Activated CD4-positive, alpha-beta memory T cell treated with anti-CD3 and anti-CD28 coated beads for 36 hours (primary cell): ENCODE measurements at regions of chr3 and their contacts with region 1.

Region 1: GRCh38 chr3:158644345-158644908 is at the start of gene GFM1:
- DNase-seq: peak; percentile 93
- H3K4me3 Mint-ChIP-seq: peak within 1 kb of the TSS; percentile 89
- H3K27ac Mint-ChIP-seq: peak within 1 kb of the TSS; percentile 86
- H3K4me1 Mint-ChIP-seq: peaks cover 38% of the 10 kb centered on the region
- H3K27me3 Mint-ChIP-seq: no peaks in the 10 kb centered on the region
- total RNA-seq, gene GFM1: 48.7 to 57.3 TPM

Region 2: DNA sequence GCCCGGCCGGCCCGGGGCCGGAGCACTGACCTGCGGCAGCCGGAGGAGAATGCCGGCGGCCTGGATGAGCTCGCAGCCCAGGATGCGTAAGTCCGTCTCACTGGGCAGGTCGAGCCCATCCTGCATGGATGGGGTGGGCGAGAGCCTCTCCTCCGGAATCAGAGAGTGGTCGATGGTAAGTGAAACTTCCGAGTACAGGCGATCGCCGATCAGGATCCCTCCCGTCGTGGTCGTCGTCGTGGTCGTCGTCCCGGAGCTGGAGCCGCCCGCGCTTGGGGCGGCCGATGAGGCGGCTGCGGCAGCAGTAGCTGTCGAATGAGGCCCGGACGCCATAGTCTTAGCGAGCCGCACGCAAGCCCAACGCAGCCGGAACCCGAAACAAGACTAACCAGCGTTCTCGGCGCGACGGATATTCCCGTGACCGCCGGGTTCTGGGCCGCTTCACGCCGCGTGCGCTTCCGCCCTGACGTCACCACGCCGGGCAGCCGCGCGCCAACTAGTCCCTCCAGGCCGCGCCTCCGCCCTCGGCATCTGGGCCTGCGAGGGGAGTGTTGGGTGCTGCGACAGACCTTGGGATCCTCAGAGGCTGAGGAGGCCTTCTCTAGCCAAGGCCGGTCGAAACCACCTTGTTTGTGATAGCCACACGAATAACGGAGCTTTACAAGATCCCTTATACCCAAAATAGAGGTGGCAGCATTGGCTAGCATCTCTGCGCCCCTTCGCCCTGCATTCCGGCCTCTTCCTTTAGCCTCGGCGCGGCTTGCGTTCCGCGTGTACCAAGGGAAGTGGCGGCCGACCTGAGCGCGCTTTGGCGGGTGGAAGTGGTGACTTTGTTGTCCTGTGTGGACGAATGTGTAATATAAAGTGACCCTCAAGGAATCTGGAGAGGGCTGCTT is 1484.4 kb before region 1 on chr3 and contains the start of gene CCNL1:
- CTCF ChIA-PET with region 1: no interaction called
- POLR2A ChIA-PET with region 1: no interaction called
- intact Hi-C with region 1: loop called (anchors 10 kb)
- DNase-seq: peak; percentile 96
- H3K4me3 Mint-ChIP-seq: peak within 1 kb of the TSS; percentile 94
- H3K27ac Mint-ChIP-seq: peak within 1 kb of the TSS; percentile 99
- H3K4me1 Mint-ChIP-seq: peaks cover 46% of the 10 kb centered on the region
- H3K27me3 Mint-ChIP-seq: peaks cover 2% of the 10 kb centered on the region
- total RNA-seq, gene CCNL1: 144 to 150 TPM

Region 3: DNA sequence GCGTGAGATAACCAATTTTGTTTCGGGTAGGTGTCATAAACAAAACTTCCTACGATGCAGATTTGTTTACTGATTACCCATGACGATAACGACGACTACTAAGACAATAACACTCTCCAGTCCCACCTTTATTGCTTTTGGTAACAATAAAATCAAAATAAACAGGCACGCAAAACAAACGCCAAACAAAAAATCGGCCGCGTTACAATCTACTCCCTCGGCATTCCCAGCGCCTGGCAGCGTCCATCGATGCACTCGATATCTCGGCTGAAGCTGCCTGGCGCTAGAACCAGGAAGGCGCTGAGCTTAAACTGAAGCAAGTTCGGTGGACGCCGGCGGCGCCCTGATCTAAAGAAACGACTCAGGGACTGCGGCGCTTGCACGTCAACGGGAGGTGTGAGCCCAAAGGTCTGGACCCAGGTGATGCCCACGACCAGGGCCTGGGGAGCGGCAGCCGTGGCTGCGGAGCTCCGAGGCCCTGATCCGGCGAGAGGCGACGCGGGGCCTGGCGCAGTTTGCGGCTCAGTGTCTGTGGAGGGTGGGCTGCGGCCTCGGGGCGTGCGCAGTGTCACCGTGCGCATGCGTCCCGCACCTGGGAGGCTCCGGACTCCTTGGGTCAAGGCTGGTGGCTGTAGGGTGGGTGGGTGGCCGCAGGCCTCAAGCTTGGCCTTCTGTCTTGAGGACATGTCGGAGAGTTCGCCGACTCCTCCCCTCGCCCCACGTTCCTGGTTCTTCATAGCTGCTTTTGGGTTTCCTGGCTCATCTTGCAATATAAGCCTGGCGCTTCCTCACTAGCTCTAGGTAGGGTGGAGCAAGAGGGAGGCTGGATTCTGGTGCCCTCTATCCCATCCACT is 534.4 kb before region 1 on chr3 and contains the start of gene RSRC1:
- CTCF ChIA-PET with region 1: no interaction called
- POLR2A ChIA-PET with region 1: no interaction called
- intact Hi-C with region 1: loop called (anchors 5 kb)
- DNase-seq: peak; percentile 85
- H3K4me3 Mint-ChIP-seq: peak within 1 kb of the TSS; percentile 99
- H3K27ac Mint-ChIP-seq: peak within 1 kb of the TSS; percentile 77
- H3K4me1 Mint-ChIP-seq: peaks cover 54% of the 10 kb centered on the region
- H3K27me3 Mint-ChIP-seq: peaks cover 36% of the 10 kb centered on the region
- total RNA-seq, gene RSRC1: 39.4 to 43.8 TPM

Region 4: DNA sequence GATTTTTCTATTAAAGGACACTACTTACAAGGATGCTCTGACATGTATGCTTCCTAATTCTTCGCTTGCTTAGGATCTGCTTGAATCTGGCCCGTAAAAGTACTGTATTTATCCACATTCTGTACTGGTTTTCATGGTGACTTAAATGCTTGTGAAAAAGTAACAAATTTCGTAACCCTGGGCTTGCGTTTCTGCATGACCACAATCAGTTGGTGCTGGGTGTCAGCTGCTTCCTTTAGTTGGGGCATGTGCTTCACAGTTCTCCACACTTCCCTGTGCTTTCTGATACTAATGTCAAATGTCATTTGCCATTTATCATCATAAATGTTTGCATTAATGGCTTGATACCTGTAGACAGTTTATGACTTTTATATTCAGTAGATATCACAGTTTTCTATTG is 291.9 kb before region 1 on chr3:
- CTCF ChIA-PET with region 1: no interaction called
- POLR2A ChIA-PET with region 1: no interaction called
- intact Hi-C with region 1: no loop called
- DNase-seq: no peak
- H3K4me3 Mint-ChIP-seq: no peak overlapping the region
- H3K27ac Mint-ChIP-seq: no peak overlapping the region
- H3K4me1 Mint-ChIP-seq: no peaks in the 10 kb centered on the region
- H3K27me3 Mint-ChIP-seq: no peaks in the 10 kb centered on the region

Region 5: DNA sequence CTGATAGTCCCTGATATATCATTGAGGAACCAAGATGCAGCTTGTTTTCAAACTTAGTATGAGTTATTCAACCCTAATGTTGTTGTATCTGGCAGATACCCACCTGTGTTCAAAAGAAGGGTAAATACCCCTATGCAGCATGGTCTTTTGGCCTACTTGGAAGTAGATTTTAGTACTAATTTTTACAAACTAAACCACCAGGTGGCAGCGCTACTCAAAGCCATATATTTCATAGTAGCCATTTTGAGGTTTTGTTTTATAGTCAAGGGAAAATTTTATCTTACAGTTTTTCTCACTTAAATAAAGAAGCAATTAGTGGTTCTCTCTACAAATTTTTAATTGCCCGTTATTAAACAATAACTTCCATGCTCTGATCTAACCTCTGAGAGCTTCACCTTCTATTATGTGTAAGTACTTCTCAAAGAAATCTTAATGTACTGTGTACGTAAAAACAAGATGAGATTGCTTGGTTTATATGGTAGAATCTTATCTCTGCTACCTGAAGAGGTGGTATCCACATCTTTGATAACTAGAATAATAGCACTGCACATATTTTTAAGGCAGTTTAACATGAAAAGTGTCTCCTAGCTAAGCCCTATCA is 104.9 kb before region 1 on chr3:
- CTCF ChIA-PET with region 1: interaction called, 21 read pairs
- POLR2A ChIA-PET with region 1: no interaction called
- intact Hi-C with region 1: loop called (anchors 5 kb)
- DNase-seq: peak; percentile 35
- H3K4me3 Mint-ChIP-seq: no peak overlapping the region
- H3K27ac Mint-ChIP-seq: no peak overlapping the region
- H3K4me1 Mint-ChIP-seq: no peaks in the 10 kb centered on the region
- H3K27me3 Mint-ChIP-seq: no peaks in the 10 kb centered on the region

Region 6: GRCh38 chr3:158659454-158660237 is 15.2 kb after region 1 on chr3:
- CTCF ChIA-PET with region 1: interaction called, 66 read pairs
- POLR2A ChIA-PET with region 1: interaction called, 9 read pairs
- intact Hi-C with region 1: loop called (anchors 1 kb)
- DNase-seq: peak; percentile 72
- H3K4me3 Mint-ChIP-seq: no peak overlapping the region
- H3K27ac Mint-ChIP-seq: no peak overlapping the region
- H3K4me1 Mint-ChIP-seq: peaks cover 5% of the 10 kb centered on the region
- H3K27me3 Mint-ChIP-seq: no peaks in the 10 kb centered on the region

Region 7: DNA sequence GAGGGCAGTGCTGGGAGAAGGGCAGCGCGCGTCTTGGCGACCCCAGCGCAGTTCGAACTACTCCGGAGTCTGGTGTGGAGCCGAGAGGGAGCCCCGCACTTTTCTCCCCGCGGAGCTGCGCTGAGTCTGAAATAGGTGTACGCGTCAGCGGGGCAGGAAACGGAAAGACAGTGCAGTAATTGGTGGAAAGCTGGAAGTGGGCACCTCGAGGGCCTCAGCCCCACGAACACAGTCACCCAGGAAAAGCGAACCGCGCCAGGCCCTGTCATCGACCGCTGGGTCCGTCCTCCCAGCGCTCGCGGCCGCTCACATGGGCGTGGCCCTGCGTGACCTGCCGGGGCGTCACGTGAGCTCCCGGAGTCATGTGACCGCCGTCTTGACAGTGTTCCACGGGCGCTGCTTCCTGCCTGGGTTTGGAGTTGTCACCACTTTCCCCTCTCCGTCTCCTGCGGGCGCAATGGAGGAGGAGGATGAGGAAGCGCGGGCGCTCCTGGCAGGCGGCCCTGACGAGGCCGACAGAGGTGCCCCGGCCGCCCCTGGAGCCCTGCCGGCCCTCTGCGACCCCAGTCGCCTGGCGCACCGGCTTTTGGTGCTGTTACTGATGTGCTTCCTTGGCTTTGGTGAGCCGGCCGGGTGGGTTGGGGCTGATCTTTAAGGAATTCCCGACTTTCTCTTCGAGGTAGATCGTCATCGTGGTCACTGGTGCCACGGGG is 157.4 kb after region 1 on chr3 and contains the start of gene MFSD1:
- CTCF ChIA-PET with region 1: interaction called, 8 read pairs
- POLR2A ChIA-PET with region 1: interaction called, 6 read pairs
- intact Hi-C with region 1: loop called (anchors 5 kb)
- DNase-seq: peak; percentile 95
- H3K4me3 Mint-ChIP-seq: peak within 1 kb of the TSS; percentile 86
- H3K27ac Mint-ChIP-seq: peak within 1 kb of the TSS; percentile 87
- H3K4me1 Mint-ChIP-seq: peaks cover 23% of the 10 kb centered on the region
- H3K27me3 Mint-ChIP-seq: no peaks in the 10 kb centered on the region
- total RNA-seq, gene MFSD1: 11.9 to 12.4 TPM